Cardiac septum (tissue), 1 donor: ENCODE measurements at regions of chr2 and their contacts with region 1.

Region 1: DNA sequence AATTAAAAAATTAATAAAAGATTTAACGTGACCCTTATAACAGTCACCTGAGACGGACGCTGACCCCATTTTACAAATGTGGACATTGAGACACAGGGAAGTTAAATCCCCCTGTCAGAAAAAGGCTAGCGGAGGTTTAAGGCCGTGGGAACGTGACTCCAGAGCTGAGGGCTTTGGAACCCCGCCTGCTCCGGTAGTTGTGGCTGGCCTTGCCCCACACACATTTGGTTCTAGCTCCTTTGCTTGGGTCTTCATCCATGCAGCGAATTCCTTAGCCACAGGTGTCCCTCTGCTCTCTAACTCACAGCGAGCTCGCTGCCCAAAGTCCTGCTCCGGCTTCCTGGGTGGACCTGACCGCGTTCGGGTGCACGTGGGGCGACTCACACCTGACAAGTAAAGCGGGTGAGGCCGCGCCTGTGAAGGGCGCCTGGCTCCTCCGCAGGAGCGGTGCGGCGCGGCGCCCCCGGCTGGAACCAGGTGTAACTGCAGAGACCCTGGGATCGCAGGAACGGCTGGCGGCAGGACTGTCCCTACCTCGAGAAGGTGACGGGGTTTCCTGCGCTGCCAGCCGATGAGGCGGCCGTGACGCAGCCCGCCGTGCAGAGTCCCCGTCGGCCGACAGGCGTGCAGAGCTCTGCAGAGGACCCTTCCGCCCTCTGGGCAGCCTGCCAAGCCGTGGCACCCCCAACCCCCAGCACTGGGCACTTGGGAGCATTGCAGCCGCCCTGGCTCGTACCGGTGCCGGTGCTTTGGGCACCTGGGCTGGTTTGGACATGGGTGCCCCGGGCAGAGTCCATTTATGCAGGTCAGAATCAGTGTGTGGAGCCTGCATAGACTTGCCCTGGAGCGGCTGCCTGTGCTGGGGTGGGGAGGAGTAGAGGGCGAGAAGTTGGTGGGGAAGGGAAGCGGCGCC is 2.4 kb upstream of the PROC start:
- DNase-seq: peak; percentile 91

Region 2: DNA sequence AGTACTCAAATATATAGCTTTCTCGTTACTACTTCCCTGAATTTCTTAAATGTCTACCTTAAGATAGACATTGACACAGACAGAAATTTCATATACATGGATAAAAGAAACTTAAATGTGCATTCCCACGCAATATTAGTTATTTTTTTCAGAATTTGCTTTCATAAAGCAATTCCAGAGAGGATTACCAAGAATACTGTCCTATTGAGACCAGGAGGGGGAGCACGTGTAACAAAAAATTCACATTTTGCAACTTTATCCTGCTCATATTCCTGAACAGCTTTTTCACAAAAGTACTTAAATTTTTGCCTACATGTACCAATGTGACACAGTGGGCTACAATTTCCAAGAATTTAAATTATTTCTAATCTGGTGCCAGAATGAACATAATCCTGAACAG is 91.2 kb before region 1 on chr2:
- intact Hi-C with region 1: loop called (anchors 10 kb)
- DNase-seq: no peak

Region 3: DNA sequence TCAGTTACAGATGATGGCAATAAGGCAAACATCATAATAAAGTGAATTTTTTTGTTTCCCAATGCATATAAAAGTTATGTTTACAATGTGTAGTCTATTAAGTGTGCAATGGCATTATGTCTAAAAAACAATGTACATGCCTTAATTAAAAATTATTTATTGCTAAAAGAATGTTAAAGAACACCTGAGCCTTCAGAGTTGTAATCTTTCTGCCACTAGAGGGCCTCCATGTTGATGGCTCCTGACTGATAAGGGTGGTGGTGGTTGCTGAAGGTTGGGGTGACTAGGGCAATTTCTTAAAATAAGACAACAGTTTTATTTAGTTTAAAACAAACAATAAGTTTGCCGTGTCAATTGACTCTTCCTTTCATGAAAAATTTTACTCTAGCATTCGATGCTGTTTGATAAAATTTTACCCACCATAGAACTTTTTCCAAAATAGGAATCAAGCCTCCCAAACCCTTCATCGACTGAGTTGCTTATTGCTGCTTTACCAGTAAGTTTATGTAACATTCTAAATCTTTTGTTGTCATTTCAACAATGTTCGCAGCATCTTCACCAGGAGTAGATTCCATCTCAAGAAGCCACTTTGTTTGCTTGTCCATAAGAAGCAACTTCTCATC is 60.4 kb before region 1 on chr2:
- intact Hi-C with region 1: loop called (anchors 2 kb)
- DNase-seq: no peak

Region 4: DNA sequence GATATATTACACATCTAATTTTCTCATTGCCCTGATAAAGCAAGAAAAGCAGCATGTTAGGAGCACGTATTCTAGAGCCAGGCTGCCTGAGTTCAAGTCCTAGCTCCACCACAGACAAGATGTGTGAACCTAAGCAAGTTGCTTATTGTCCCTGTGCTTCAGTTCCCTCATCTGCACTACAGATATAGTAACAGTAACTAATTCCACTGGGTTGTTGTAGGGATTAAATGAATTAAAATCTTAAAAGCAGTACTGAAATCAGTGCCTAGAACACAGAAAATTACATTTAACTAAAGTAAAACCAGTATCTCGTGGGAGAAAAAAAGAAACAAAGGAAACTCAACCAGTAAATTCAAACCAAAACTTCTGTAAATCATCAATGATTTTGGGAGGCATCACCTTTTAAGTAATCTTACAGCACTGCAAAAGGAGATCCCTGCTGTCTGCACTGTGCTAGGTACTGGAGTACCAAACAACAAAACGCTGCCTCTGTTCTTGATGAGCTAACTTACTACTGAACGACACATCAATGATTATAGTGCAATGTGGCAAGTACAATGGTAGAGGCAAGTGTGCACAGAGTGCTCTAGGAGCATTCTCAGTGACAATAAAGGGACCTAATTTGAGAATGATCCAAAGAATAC is 36.0 kb before region 1 on chr2:
- intact Hi-C with region 1: loop called (anchors 5 kb)
- DNase-seq: no peak